ENCODE measurements at regions of chr9 and their contacts with region 1.

Region 1: GRCh38 chr9:32378993-32379729 is 5.3 kb upstream of the ACO1 start:
- DNase-seq: peak; percentile 86
- H3K4me3 ChIP-seq: no peak overlapping the region
- H3K27ac ChIP-seq: no peak overlapping the region
- H3K4me1 ChIP-seq: peaks cover 7% of the 10 kb centered on the region
- H3K27me3 ChIP-seq: peaks cover 13% of the 10 kb centered on the region
- CTCF ChIP-seq: peak; percentile 84

Region 2: DNA sequence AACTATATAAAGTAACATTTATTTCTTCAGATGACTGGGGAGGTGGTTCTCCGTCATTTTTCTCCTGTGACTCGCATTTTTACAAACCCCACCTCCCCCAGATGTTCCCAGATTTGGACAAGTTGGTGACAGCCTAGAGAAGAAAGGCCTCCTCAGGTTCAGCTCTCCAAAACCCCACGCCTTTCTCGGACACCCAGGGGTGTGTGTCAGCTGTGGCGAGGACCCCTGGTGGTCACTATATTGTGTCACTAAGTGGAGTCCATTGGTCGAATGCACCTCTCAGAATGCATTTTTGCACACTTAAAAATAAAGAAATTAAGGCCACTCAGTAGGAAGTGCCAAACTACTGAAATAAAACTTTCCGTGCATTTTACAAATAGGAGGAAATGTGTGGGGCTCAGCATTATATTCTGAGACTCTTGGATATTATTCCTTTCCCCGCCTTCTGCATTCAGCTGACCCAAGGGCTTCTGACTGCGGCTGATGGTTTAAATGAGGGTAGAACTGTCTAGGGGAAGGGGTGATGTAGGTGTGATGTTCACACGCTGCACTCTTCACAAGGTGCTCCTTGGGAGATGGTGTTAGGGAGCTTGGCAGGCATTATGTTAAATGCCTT is 52.9 kb after region 1 on chr9:
- CTCF ChIA-PET with region 1: interaction called, 13 read pairs
- POLR2A ChIA-PET with region 1: no interaction called
- intact Hi-C with region 1: loop called (anchors 5 kb)
- DNase-seq: peak; percentile 40
- H3K4me3 ChIP-seq: no peak overlapping the region
- H3K27ac ChIP-seq: no peak overlapping the region
- H3K4me1 ChIP-seq: no peaks in the 10 kb centered on the region
- H3K27me3 ChIP-seq: no peaks in the 10 kb centered on the region
- CTCF ChIP-seq: peak; percentile 60

Region 3: DNA sequence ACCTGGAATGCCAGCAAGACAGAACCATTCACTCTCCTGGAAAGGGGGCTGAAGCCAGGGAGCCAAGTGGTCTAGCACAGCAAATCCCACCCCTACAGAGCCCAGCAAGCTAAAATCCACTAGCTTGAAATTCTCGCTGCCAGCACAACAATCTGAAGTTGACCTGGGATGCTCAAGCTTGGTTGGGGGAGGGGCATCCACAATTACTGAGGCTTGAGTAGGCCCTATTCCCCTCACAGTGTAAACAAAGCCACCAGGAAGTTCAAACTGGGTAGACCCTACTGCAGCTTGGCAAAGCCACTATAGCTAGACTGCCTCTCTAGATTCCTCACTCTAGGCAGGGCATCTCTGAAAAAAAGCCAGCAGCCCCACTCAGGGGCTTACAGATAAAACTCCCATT is 129.6 kb after region 1 on chr9:
- CTCF ChIA-PET with region 1: no interaction called
- POLR2A ChIA-PET with region 1: no interaction called
- intact Hi-C with region 1: no loop called
- DNase-seq: no peak
- H3K4me3 ChIP-seq: no peak overlapping the region
- H3K27ac ChIP-seq: no peak overlapping the region
- H3K4me1 ChIP-seq: no peaks in the 10 kb centered on the region
- H3K27me3 ChIP-seq: no peaks in the 10 kb centered on the region
- CTCF ChIP-seq: no peak

Region 4: DNA sequence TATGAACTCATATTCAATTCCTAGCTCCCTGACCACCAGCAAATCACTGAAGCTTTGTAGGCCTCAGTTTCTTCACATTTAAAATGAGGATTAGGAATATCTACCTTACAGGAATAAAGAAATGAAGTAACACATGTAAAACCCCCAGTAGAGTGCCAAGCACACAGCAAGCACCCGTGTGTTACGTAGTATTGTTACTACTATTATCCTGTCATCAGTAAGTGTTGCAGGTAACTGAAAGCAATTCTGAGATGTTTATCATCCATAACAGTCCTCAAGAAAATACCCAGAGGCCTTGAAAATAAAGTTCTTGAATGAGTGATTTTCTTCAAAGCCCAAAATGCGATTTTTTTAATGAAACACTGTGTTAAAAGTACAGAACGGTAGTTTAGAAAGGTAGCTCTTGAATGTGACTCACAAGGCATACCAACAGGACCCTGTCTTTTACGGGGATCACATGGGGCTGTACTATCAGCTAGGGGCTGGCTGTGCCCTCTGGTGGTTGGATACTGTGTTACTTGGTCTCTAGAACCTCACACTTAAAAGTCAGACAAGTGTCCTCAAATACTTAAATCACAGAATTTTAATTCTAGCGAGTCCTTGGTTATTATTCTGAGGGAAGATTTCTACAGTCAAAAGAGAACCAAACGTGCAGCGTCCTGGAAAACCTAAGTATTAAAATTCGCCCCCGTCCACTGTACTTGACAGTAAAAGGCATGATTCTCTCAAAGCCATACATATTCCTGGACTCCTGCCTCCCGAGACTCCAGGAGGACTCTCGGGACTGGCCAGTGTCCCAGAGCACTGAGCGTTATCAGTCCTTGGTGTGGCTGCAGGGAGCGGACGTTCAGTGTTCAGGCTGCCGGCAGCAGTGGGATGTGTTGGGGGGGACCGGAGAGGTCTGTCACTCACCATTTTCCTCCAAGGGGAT is 193.1 kb after region 1 on chr9:
- CTCF ChIA-PET with region 1: interaction called, 29 read pairs
- POLR2A ChIA-PET with region 1: no interaction called
- intact Hi-C with region 1: loop called (anchors 2 kb)
- DNase-seq: peak; percentile 81
- H3K4me3 ChIP-seq: peak overlapping the region; percentile 92
- H3K27ac ChIP-seq: peak overlapping the region; percentile 79
- H3K4me1 ChIP-seq: peaks cover 15% of the 10 kb centered on the region
- H3K27me3 ChIP-seq: no peaks in the 10 kb centered on the region
- CTCF ChIP-seq: peak; percentile 73

Region 5: GRCh38 chr9:32703635-32704034 is 324.5 kb after region 1 on chr9:
- CTCF ChIA-PET with region 1: no interaction called
- POLR2A ChIA-PET with region 1: no interaction called
- intact Hi-C with region 1: loop called (anchors 10 kb)
- DNase-seq: peak; percentile 19
- H3K4me3 ChIP-seq: no peak overlapping the region
- H3K27ac ChIP-seq: no peak overlapping the region
- H3K4me1 ChIP-seq: no peaks in the 10 kb centered on the region
- H3K27me3 ChIP-seq: peaks cover 37% of the 10 kb centered on the region
- CTCF ChIP-seq: peak; percentile 49